IMR-90 (cell line): ENCODE measurements at regions of chr4 and their contacts with region 1.

Region 1: DNA sequence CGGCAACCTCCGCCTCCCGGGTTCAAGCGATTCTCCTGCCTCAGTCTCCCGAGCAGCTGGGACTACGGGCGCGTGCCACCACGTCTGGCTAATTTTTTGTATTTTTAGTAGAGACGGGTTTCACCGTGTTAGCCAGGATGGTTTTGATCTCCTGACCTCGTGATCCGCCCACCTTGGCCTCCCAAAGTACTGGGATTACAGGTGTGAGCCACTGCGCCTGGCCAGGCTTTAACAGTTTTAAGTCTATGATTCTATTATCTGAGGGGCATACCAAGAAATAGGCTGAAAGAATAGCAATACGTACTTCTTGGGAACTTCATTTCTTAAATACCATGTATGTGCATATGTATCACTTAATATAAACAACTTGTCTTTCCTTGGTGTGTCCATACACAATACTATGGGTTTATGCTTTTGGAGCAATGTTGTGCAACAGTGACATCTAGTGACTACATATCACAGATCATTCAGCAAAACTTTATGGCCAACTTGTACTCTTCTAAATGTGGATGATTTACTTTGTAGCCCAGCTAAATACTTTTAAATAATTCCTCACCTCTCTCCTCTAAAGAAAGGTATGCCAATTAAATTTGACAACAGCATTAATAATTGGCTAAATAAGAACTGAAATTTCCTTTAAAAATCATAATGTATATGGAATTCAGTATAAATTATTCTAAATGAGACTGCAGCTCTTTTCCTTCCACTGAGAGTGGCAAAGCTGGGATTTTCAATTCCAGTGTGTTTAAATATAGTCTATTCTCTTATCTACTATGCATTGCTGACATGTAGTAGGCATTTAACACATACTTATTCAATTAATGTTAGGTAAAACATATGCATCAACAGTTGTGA is 10.4 kb downstream of the SLC9B1 start:
- DNase-seq: peak; percentile 80
- ATAC-seq: peak; percentile 82
- H3K4me3 ChIP-seq: no peak overlapping the region
- H3K27ac ChIP-seq: no peak overlapping the region
- H3K4me1 ChIP-seq: peaks cover 10% of the 10 kb centered on the region
- H3K27me3 ChIP-seq: no peaks in the 10 kb centered on the region; the same call in 1 of the 2 replicates
- CTCF ChIP-seq: peak; percentile 91
- POLR2A ChIP-seq: no peak
- RAD21 ChIP-seq: peak; percentile 96

Region 2: GRCh38 chr4:102430461-102430910 is 578.6 kb before region 1 on chr4:
- CTCF ChIA-PET with region 1: no interaction called
- POLR2A ChIA-PET with region 1: no interaction called
- dilution Hi-C with region 1: no loop called
- in situ Hi-C with region 1: no loop called
- intact Hi-C with region 1: loop called (anchors 2 kb)
- DNase-seq: peak; percentile 16
- ATAC-seq: peak; percentile 9
- H3K4me3 ChIP-seq: peak overlapping the region; percentile 61
- H3K27ac ChIP-seq: no peak overlapping the region
- H3K4me1 ChIP-seq: peaks cover 4% of the 10 kb centered on the region; the same call in 1 of the 2 replicates
- H3K27me3 ChIP-seq: no peaks in the 10 kb centered on the region
- CTCF ChIP-seq: no peak
- POLR2A ChIP-seq: no peak
- RAD21 ChIP-seq: no peak

Region 3: GRCh38 chr4:102500696-102501446 is 508.2 kb before region 1 on chr4 and contains the start of gene NFKB1:
- CTCF ChIA-PET with region 1: no interaction called
- POLR2A ChIA-PET with region 1: no interaction called
- dilution Hi-C with region 1: no loop called
- in situ Hi-C with region 1: no loop called
- intact Hi-C with region 1: loop called (anchors 5 kb)
- DNase-seq: peak; percentile 89
- ATAC-seq: peak; percentile 67
- H3K4me3 ChIP-seq: peak within 1 kb of the TSS; percentile 70
- H3K27ac ChIP-seq: peak within 1 kb of the TSS; percentile 86
- H3K4me1 ChIP-seq: peaks cover 3% of the 10 kb centered on the region; the same call in 1 of the 2 replicates
- H3K27me3 ChIP-seq: no peaks in the 10 kb centered on the region
- CTCF ChIP-seq: no peak
- POLR2A ChIP-seq: peak; percentile 72; the same call in 1 of the 2 replicates
- RAD21 ChIP-seq: no peak
- total RNA-seq, gene NFKB1: 23.6 and 24.6 TPM in 2 replicates

Region 4: DNA sequence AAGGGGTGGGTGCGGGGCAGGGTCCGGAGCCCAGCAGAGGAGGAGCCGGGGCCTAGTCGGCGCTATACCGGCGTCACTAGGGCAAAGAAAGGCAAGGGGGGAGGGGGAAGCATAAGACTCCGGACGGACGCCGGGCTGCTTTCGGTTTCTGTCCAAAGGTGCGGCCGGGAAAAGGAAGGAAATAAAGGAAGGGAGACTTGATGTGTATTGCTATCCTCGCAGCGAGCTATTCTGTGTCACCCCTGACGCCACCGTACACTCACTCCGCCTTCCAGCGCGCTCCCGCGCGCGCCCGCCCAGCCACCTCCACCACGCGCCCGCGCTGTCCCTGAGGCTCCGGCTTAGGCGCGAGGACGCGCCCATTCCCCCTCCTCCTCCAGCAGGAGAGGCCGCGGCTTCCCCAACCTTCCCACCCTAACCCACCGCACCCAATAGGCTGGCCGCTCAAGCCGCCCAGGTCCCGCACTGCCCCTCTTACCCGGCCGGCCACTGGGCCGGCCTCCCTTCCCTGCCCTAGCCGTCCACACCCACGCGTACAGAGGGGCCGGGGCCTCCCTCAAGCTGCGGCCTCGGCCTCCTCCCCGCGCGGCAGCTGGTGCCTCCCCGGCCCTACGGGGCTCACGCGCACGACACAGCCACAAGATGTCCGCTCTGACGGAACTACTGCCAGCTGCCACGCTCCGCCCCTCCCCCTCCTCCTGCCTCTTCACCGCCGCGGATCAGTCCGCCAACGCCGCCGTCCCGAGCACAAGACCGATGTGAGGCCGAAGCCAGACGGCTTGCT is 182.0 kb before region 1 on chr4 and contains the start of gene UBE2D3:
- CTCF ChIA-PET with region 1: no interaction called
- POLR2A ChIA-PET with region 1: no interaction called
- dilution Hi-C with region 1: no loop called
- in situ Hi-C with region 1: no loop called
- intact Hi-C with region 1: loop called (anchors 2 kb)
- DNase-seq: peak; percentile 97
- ATAC-seq: peak; percentile 60
- H3K4me3 ChIP-seq: peak within 1 kb of the TSS; percentile 69
- H3K27ac ChIP-seq: peak within 1 kb of the TSS; percentile 97
- H3K4me1 ChIP-seq: peaks cover 4% of the 10 kb centered on the region; the same call in 1 of the 2 replicates
- H3K27me3 ChIP-seq: no peaks in the 10 kb centered on the region
- CTCF ChIP-seq: peak; percentile 14; the same call in 1 of the 2 replicates
- POLR2A ChIP-seq: peak; percentile 89
- RAD21 ChIP-seq: 0 out of 2 replicates have a peak, but pooled peaks have one; percentile 4
- total RNA-seq, gene UBE2D3: 387 and 407 TPM in 2 replicates

Region 5: DNA sequence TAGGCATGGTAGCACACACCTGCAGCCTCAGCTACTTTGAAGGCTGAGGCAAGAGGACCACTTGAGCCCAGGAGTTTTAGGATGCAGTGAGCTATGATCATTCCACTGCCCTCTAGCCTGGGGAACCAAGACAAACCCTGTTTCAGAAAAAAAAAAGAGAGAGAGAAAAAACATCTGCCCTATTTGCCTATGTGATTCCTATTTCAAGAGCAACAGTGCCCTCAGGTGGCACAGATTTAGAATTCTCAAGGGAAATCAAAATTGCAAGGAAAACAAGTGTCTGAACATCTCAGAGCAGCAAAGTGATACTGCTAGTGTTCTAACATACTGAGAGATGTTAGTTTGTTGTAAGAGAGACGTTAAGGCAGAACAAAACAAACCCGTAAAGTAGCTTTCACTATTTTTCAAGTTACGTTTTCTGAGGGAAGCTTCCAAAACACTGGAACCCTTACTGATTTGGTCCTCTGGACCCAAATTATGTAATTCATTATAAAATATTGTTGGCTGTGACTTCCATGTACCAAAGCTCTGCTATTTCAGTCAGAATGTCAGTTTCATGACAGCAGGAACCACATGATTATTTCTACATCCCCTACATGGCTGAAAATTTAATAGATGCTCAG is 82.6 kb after region 1 on chr4:
- CTCF ChIA-PET with region 1: interaction called, 5 read pairs
- POLR2A ChIA-PET with region 1: no interaction called
- dilution Hi-C with region 1: no loop called
- in situ Hi-C with region 1: no loop called
- intact Hi-C with region 1: loop called (anchors 1 kb)
- DNase-seq: peak; percentile 79
- ATAC-seq: peak; percentile 77
- H3K4me3 ChIP-seq: no peak overlapping the region
- H3K27ac ChIP-seq: no peak overlapping the region
- H3K4me1 ChIP-seq: peaks cover 2% of the 10 kb centered on the region; the same call in 1 of the 2 replicates
- H3K27me3 ChIP-seq: no peaks in the 10 kb centered on the region
- CTCF ChIP-seq: peak; percentile 85
- POLR2A ChIP-seq: no peak
- RAD21 ChIP-seq: peak; percentile 88